ENCODE measurements at regions of chr2 and their contacts with region 1.

Region 1: GRCh38 chr2:119301413-119301812 is 65.2 kb downstream of the C2orf76 start:
- DNase-seq: no peak
- ATAC-seq: no peak
- H3K4me3 Mint-ChIP-seq: no peak overlapping the region
- H3K27ac Mint-ChIP-seq: no peak overlapping the region
- H3K4me1 Mint-ChIP-seq: no peaks in the 10 kb centered on the region
- H3K27me3 Mint-ChIP-seq: no peaks in the 10 kb centered on the region
- CTCF ChIP-seq: no peak

Region 2: GRCh38 chr2:118855451-118856279 is 445.7 kb before region 1 on chr2:
- CTCF ChIA-PET with region 1: no interaction called
- POLR2A ChIA-PET with region 1: no interaction called
- intact Hi-C with region 1: no loop called
- DNase-seq: peak; percentile 77
- ATAC-seq: peak; percentile 90
- H3K4me3 Mint-ChIP-seq: peak overlapping the region; percentile 61
- H3K27ac Mint-ChIP-seq: peak overlapping the region; percentile 30
- H3K4me1 Mint-ChIP-seq: peaks cover 23% of the 10 kb centered on the region
- H3K27me3 Mint-ChIP-seq: peaks cover 65% of the 10 kb centered on the region
- CTCF ChIP-seq: peak; percentile 90

Region 3: GRCh38 chr2:119240311-119241202 is 60.9 kb before region 1 on chr2:
- CTCF ChIA-PET with region 1: no interaction called
- POLR2A ChIA-PET with region 1: no interaction called
- intact Hi-C with region 1: no loop called
- DNase-seq: no peak
- ATAC-seq: no peak
- H3K4me3 Mint-ChIP-seq: no peak overlapping the region
- H3K27ac Mint-ChIP-seq: no peak overlapping the region
- H3K4me1 Mint-ChIP-seq: peaks cover 12% of the 10 kb centered on the region
- H3K27me3 Mint-ChIP-seq: peaks cover 5% of the 10 kb centered on the region
- CTCF ChIP-seq: no peak

Region 4: GRCh38 chr2:119290859-119291587 is 10.4 kb before region 1 on chr2:
- CTCF ChIA-PET with region 1: interaction called, 10 read pairs
- POLR2A ChIA-PET with region 1: no interaction called
- intact Hi-C with region 1: no loop called
- DNase-seq: peak; percentile 37
- ATAC-seq: peak; percentile 75
- H3K4me3 Mint-ChIP-seq: no peak overlapping the region
- H3K27ac Mint-ChIP-seq: no peak overlapping the region
- H3K4me1 Mint-ChIP-seq: peaks cover 3% of the 10 kb centered on the region
- H3K27me3 Mint-ChIP-seq: no peaks in the 10 kb centered on the region
- CTCF ChIP-seq: peak; percentile 30